Panc1 (cell line): ENCODE measurements at regions of chr12 and their contacts with region 1.

Region 1: DNA sequence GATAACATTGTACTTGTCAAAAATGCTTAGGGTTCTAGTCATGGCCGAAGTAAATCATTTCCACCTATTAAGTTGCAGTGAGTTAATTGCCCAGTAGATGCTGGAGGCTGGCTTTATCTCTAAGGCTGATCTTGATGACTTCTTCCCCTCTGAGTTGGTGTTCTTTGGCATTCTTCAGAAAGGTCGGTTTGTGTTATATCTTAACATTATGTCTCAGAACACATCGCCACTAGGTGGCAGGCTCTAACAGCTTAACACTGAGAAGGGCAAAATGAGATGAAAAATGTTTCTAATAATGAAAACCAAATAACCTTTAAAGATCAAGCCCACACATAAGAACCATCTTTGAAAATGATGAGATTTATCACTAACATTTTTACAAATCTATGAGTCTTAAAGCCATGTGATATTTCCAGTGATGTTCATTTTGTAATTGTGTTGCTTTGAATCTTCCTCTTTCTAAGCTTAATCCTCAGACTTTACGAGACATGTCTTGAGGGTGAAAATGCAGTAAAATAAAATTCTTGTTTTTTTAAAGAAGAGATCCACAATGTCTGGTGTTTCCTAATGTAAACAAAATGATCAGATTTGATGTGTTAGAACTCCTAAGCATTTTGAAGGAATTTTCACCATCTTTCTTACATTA is 28.6 kb downstream of the SUDS3 start:
- DNase-seq: peak; percentile 27
- ATAC-seq: peak; percentile 87
- H3K4me3 ChIP-seq: no peak overlapping the region
- H3K27ac ChIP-seq: no peak overlapping the region
- H3K4me1 ChIP-seq: no peaks in the 10 kb centered on the region
- H3K27me3 ChIP-seq: no peaks in the 10 kb centered on the region
- CTCF ChIP-seq: peak; percentile 82

Region 2: DNA sequence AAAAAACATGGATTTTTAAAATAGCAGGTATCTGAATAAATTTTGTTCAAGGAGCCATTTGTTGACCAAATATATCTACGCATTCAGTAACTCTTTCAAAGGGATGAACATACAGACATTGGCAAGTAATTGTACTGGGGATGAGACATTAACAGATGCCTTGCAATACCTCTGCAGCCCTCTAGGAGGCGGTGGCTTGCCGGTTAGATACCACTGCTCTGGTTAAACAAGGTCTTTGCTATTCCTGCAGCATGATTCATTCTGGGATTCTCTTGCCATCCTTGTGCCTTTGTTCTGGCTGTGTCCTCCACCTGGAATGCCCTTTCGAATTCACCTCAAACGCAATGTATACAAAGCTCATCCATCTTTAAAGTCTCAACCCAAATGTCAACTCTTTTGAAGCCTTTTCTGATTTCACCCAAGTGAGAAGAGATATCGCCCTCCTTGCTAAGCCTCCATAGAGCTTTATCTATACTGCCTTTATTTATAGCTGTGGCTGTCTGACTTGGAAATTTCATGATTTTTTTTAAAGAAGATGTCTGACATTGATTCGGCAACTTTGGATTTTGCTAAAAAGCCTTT is 445.3 kb after region 1 on chr12:
- CTCF ChIA-PET with region 1: no interaction called
- POLR2A ChIA-PET with region 1: no interaction called
- in situ Hi-C with region 1: no loop called
- intact Hi-C with region 1: loop called (anchors 5 kb)
- DNase-seq: no peak
- ATAC-seq: no peak
- H3K4me3 ChIP-seq: no peak overlapping the region
- H3K27ac ChIP-seq: no peak overlapping the region
- H3K4me1 ChIP-seq: no peaks in the 10 kb centered on the region
- H3K27me3 ChIP-seq: no peaks in the 10 kb centered on the region; the same call in 1 of the 2 replicates
- CTCF ChIP-seq: peak; percentile 81

Region 3: GRCh38 chr12:119102274-119102673 is 697.3 kb after region 1 on chr12:
- CTCF ChIA-PET with region 1: no interaction called
- POLR2A ChIA-PET with region 1: no interaction called
- in situ Hi-C with region 1: no loop called
- intact Hi-C with region 1: no loop called
- DNase-seq: no peak
- ATAC-seq: no peak
- H3K4me3 ChIP-seq: no peak overlapping the region
- H3K27ac ChIP-seq: no peak overlapping the region
- H3K4me1 ChIP-seq: no peaks in the 10 kb centered on the region
- H3K27me3 ChIP-seq: peaks cover 5% of the 10 kb centered on the region
- CTCF ChIP-seq: no peak